ENCODE measurements at regions of chr17 and their contacts with region 1.

Region 1: DNA sequence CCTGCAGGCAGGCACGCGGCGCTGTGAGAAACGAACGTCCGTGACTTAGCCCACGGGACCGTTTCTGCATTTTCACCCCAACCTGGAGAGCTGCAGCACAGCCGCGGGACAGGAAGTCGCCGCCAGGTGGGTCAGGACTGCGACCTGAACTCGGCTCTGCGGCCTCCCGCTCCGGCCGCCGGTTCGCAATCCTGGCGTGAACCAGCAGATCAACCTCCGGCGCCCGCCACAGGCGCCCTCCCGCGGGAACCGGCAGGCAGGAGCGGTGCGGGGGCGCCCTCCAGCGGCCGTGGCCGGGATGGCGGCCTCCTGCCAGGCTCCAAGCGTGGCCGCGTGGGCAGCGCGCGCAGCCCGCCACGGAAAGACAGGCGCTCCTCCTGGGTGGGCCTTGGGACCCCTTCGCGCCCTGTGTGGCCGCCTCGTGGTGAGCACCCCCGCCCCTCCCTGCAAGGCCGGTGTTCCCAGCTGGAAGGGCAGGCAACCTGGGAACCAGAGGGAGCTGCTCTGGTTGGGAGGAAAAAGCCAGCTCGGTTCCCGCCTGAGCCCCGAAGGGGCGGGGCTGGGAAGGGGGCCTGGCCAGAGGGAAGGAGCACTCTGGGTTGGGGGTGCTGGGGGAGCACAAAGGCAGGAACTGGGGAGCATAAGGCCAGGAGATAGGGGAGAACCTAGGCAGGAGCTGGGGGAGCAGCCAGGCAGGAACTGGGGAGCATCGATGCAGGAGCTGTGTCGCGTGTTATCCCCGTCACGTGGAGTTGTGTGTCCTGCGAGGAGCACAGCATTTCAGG is 28.2 kb downstream of the ACTG1 start:
- DNase-seq: peak; percentile 89
- CTCF ChIP-seq: peak; percentile 96

Region 2: DNA sequence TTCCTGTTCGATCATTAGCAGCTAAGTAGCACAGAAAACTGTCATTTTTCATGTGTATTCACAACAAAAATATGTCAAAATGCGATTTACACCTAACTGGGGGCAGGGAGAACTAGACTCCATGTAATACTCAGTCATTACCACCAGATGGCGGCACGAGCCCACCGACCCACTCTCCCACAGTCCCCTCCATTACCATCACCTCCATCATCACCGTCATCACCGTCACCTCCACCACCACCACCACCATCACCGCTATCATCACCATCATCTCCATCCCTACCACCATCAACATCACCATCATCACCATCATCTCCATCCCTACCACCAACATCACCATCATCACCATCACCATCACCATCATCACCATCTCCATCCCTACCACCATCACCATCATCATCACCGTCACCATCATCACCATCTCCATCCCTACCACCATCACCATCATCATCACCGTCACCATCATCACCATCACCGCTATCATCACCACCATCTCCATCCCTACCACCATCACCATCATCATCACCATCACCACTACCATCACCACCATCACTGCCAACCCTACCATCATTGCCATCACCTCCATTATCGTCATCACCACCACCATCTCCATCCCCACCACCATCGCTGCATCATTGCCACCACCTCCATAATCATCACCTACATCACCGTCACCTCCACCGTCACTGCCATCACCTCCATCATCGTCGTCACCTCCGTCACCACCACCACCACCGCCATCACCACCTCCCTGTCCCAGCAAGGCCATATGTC is 230.8 kb before region 1 on chr17:
- CTCF ChIA-PET with region 1: interaction called, 41 read pairs
- POLR2A ChIA-PET with region 1: no interaction called
- DNase-seq: peak; percentile 72
- CTCF ChIP-seq: peak; percentile 64

Region 3: GRCh38 chr17:81294856-81295680 is 189.3 kb before region 1 on chr17 and contains the start of gene SLC38A10:
- CTCF ChIA-PET with region 1: interaction called, 37 read pairs
- POLR2A ChIA-PET with region 1: no interaction called
- DNase-seq: peak; percentile 98
- CTCF ChIP-seq: no peak

Region 4: DNA sequence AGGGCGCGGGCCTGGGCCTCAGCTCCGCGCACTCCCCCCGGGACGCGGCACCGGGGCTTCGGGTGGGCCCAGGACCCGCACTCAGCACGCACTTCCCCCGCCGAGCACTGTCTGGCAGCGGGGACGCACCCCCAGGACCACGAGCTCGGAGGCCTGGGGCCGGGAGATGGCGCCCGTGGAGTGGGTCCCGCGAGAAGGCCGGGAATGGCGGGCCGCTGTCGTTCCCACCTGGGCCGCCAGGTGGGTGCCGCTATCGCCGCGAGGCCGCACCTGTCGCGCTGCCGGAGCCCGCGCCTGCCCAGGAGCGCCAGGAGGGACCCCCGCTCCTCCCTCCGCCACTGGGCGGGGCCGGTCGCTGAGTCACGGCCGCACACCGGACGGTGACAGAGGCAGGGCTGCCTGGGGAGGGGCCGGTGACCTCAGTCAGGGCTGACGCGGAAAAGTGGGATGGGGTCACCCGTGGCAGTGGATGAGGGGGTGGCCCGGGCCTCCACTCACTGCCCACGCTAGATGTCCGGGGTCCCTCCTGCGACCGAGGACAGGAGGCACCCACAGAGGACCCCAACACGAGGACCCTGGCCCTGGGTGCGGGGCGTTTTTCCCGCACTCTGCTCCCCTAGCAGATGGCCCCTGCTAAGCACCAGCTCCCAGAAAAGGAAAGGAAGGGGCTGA is 35.0 kb after region 1 on chr17:
- CTCF ChIA-PET with region 1: interaction called, 14 read pairs
- POLR2A ChIA-PET with region 1: no interaction called
- DNase-seq: peak; percentile 77
- CTCF ChIP-seq: peak; percentile 42

Region 5: DNA sequence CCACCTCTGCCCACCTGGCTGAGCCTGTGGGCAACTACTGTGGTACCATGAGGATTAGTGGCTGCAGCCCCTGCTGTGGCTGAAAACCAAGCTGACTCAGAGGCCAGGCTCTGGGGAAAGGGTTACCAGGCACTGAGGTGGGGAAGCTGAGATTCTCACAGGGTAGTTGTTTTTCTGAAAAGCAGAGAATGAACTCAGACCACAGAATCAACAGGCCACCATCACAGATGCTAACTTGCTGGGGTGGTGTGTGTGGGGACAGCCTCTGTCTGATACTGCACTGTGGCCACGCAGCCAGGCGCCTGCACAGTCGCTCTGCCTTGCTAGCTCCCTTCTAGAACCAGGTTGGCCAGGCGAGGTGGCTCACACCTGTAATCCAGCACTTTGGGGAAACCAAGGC is 123.7 kb after region 1 on chr17:
- CTCF ChIA-PET with region 1: no interaction called
- POLR2A ChIA-PET with region 1: no interaction called
- DNase-seq: no peak
- CTCF ChIP-seq: no peak

Measured in GM10248 (cell line).